Natural killer cell (primary cell): ENCODE measurements at regions of chr11 and their contacts with region 1.

Region 1: DNA sequence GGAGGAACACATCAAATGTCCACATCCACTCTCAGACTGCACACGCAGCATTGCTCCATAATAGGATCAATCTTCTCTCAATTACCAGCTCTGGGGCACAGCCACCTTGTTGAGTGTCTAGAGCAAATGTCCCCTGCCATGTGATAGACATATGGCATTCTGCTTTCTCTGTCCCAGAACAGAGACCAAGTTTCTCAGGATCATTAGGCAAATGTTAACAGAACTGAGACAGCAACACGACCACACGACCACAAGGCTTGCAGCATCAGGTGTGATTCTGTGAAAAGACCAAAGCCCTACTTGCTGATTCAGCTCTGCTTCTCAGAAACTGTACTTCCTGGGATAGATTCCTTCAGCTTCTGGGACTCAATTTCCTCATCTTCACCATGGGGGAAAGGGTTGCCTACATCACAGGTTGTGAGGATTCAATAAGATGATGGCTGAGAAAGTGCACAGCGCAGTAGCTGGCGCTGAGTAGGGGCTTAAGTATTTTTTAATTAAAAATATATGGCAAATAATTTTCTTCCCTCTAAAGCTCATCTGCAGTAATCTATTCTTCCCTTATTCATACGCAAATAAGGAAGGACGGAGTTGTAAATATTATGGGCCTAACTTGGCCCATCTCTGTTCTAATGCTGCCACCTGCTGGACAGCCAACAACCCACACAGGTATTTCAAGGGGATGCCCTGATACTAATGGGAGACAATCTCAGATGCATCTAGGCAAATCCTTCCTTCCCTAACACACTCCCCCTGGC is 54.3 kb upstream of the USP47 start:
- DNase-seq: peak; percentile 55 to 84
- ATAC-seq: peak; percentile 83 to 90 (median 89)
- H3K4me3 ChIP-seq: no peak overlapping the region
- H3K4me3 Mint-ChIP-seq: no peak overlapping the region
- H3K27ac ChIP-seq: no peak overlapping the region
- H3K27ac Mint-ChIP-seq: no peak overlapping the region
- H3K4me1 ChIP-seq: no peaks in the 10 kb centered on the region
- H3K4me1 Mint-ChIP-seq: no peaks in the 10 kb centered on the region
- H3K27me3 ChIP-seq: no peaks in the 10 kb centered on the region
- H3K27me3 Mint-ChIP-seq: peaks cover 9 to 15% of the 10 kb centered on the region in 2 donors
- CTCF ChIP-seq: peak; percentile 95

Region 2: GRCh38 chr11:10792398-10792975 is 995.0 kb before region 1 on chr11:
- intact Hi-C with region 1: loop called (anchors 5 kb)
- DNase-seq: peak; percentile 82 to 89
- ATAC-seq: peak; percentile 91 to 97 (median 95)
- H3K4me3 ChIP-seq: no peak overlapping the region
- H3K4me3 Mint-ChIP-seq: no peak overlapping the region
- H3K27ac ChIP-seq: no peak overlapping the region
- H3K27ac Mint-ChIP-seq: no peak overlapping the region
- H3K4me1 ChIP-seq: peaks cover 14% of the 10 kb centered on the region
- H3K4me1 Mint-ChIP-seq: peaks cover 27 to 28% of the 10 kb centered on the region in 2 donors
- H3K27me3 ChIP-seq: peaks cover 2% of the 10 kb centered on the region
- H3K27me3 Mint-ChIP-seq: peaks cover 8 to 14% of the 10 kb centered on the region in 2 donors
- CTCF ChIP-seq: peak; percentile 96

Region 3: DNA sequence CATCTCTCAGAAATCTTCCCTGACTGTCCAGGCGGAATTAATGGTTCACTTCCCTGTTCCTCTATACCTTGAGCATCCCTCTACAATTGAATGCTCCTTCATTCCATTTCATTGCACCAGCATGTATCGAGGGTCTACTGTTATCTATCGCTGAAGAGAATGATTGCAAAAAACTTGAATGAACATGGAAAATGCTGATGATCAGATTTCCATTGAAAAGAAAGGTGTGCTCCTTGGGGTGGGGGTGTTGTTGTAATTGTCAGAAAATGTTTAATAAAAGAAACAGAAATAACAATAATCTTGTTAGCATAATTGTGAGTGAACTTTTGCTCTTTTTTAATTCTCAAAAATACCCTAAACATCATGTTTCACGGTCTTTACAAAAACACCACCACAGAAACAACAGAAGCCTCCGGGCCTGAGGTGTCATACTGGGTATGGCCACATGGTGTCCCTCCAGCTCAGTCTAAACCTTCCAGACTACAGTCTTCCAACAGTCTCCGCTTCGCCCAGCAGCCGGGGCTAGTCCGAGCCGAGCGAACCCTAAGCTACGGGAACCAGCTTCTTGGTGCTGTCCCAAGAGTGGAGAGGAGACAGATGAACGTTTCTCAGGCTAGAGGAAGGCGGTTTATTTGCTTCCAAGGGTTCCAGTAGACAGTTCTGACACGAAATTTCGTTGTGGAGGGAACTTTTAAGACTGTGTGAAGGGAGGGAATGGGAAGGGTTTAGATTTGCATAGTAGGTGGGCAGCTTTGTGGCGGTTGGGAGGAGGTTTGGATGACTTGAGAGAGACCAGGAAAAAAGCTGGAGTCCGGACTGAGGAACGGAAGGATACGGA is 853.8 kb before region 1 on chr11:
- intact Hi-C with region 1: loop called (anchors 2 kb)
- DNase-seq: peak; percentile 72 to 90
- ATAC-seq: peak; percentile 87 to 92 (median 89)
- H3K4me3 ChIP-seq: peak overlapping the region; percentile 20
- H3K4me3 Mint-ChIP-seq: peak overlapping the region; percentile 78
- H3K27ac ChIP-seq: no peak overlapping the region
- H3K27ac Mint-ChIP-seq: peak overlapping the region in 1 of 2 donors; percentile 54
- H3K4me1 ChIP-seq: peaks cover 22% of the 10 kb centered on the region
- H3K4me1 Mint-ChIP-seq: peaks cover 8 to 22% of the 10 kb centered on the region in 2 donors
- H3K27me3 ChIP-seq: peaks cover 28% of the 10 kb centered on the region
- H3K27me3 Mint-ChIP-seq: peaks cover 43 to 49% of the 10 kb centered on the region in 2 donors
- CTCF ChIP-seq: peak; percentile 93

Region 4: GRCh38 chr11:11028017-11028692 is 759.3 kb before region 1 on chr11:
- intact Hi-C with region 1: loop called (anchors 1 kb)
- DNase-seq: peak; percentile 56 to 87
- ATAC-seq: peak; percentile 77 to 87 (median 82)
- H3K4me3 ChIP-seq: no peak overlapping the region
- H3K4me3 Mint-ChIP-seq: no peak overlapping the region
- H3K27ac ChIP-seq: no peak overlapping the region
- H3K27ac Mint-ChIP-seq: no peak overlapping the region
- H3K4me1 ChIP-seq: no peaks in the 10 kb centered on the region
- H3K4me1 Mint-ChIP-seq: no peaks in the 10 kb centered on the region
- H3K27me3 ChIP-seq: peaks cover 4% of the 10 kb centered on the region
- H3K27me3 Mint-ChIP-seq: peaks cover 17 to 30% of the 10 kb centered on the region in 2 donors
- CTCF ChIP-seq: peak; percentile 79

Region 5: GRCh38 chr11:11493698-11494097 is 293.8 kb before region 1 on chr11:
- intact Hi-C with region 1: loop called (anchors 2 kb)
- DNase-seq: no peak
- ATAC-seq: no peak
- H3K4me3 ChIP-seq: no peak overlapping the region
- H3K4me3 Mint-ChIP-seq: no peak overlapping the region
- H3K27ac ChIP-seq: no peak overlapping the region
- H3K27ac Mint-ChIP-seq: no peak overlapping the region
- H3K4me1 ChIP-seq: no peaks in the 10 kb centered on the region
- H3K4me1 Mint-ChIP-seq: peaks cover 0 to 5% of the 10 kb centered on the region in 2 donors
- H3K27me3 ChIP-seq: no peaks in the 10 kb centered on the region
- H3K27me3 Mint-ChIP-seq: peaks cover 8 to 13% of the 10 kb centered on the region in 2 donors
- CTCF ChIP-seq: no peak

Region 6: DNA sequence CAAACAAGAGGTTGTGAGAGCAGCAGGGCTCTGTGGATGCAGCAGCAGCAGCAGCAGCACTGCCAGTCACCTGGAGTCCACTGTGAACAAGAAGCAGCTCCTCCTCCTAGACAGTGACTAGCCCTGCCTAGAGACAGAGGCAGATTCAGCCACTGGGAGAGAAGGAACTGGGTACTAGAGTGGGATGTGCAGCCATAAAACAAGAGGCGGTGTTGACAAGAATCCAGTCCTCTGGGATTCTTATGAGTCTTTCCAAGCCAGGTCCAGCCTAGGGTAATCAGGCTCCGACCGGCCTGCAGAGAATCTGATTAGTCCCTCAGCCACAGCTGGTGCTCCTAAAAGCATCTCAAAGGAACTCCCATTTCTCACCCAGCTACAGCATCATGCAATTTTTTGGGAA is 29.6 kb before region 1 on chr11:
- intact Hi-C with region 1: no loop called
- DNase-seq: no peak
- ATAC-seq: no peak
- H3K4me3 ChIP-seq: no peak overlapping the region
- H3K4me3 Mint-ChIP-seq: no peak overlapping the region
- H3K27ac ChIP-seq: no peak overlapping the region
- H3K27ac Mint-ChIP-seq: no peak overlapping the region
- H3K4me1 ChIP-seq: no peaks in the 10 kb centered on the region
- H3K4me1 Mint-ChIP-seq: no peaks in the 10 kb centered on the region
- H3K27me3 ChIP-seq: no peaks in the 10 kb centered on the region
- H3K27me3 Mint-ChIP-seq: peaks cover 21 to 58% of the 10 kb centered on the region in 2 donors
- CTCF ChIP-seq: no peak